WTC11 (cell line): ENCODE measurements at regions of chr19 and their contacts with region 1.

Region 1: DNA sequence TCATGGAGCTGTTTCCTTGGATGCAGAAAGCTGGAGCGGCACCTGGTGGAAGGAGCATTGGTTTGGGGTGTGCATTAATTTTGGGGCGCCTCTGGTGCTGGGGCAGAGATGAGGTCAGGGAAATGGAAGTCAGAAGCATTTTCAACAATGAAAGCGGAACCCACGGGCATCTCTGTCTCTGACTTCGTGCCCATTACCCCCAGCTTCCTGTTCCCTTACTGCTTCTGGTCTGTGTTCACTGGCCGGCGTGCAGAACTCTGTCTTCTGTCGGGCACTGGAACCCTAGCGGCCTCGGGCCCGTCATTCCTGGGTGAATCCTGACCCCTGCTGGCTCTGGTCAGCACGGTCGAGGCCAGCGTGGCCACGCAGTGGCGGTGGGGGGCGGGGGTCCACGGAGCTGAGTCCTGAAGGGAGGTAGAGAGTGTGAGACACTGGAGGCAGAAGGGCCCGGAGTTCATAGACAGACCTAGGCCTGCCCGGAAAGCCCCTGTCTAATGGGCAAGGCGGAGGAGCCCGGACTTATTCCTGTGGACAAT is 7.9 kb upstream of the LINGO3 start:
- DNase-seq: peak; percentile 82
- ATAC-seq: peak; percentile 71
- H3K4me3 Mint-ChIP-seq: no peak overlapping the region
- H3K27ac Mint-ChIP-seq: no peak overlapping the region
- H3K4me1 Mint-ChIP-seq: 0 out of 2 replicates have a peak, but pooled peaks cover 2% of the 10 kb centered on the region
- H3K27me3 Mint-ChIP-seq: peaks cover 9% of the 10 kb centered on the region
- CTCF ChIP-seq: no peak

Region 2: GRCh38 chr19:2151339-2152229 is 164.3 kb before region 1 on chr19 and contains the start of gene AP3D1:
- CTCF ChIA-PET with region 1: interaction called, 20 read pairs
- POLR2A ChIA-PET with region 1: no interaction called
- DNase-seq: peak; percentile 100
- ATAC-seq: peak; percentile 93
- H3K4me3 Mint-ChIP-seq: peak within 1 kb of the TSS; percentile 85
- H3K27ac Mint-ChIP-seq: peak within 1 kb of the TSS; percentile 97
- H3K4me1 Mint-ChIP-seq: peaks cover 28% of the 10 kb centered on the region
- H3K27me3 Mint-ChIP-seq: no peaks in the 10 kb centered on the region
- CTCF ChIP-seq: no peak
- total RNA-seq, gene AP3D1: 160 to 190 TPM (median 163 TPM) in 3 replicates

Region 3: GRCh38 chr19:2236314-2237050 is 79.4 kb before region 1 on chr19 and contains the starts of genes PLEKHJ1 and SF3A2:
- CTCF ChIA-PET with region 1: interaction called, 12 read pairs
- POLR2A ChIA-PET with region 1: interaction called, 4 read pairs
- DNase-seq: peak; percentile 97
- ATAC-seq: peak; percentile 83
- H3K4me3 Mint-ChIP-seq: peak within 1 kb of the TSS; percentile 93
- H3K27ac Mint-ChIP-seq: peak within 1 kb of the TSS; percentile 99
- H3K4me1 Mint-ChIP-seq: peaks cover 42% of the 10 kb centered on the region
- H3K27me3 Mint-ChIP-seq: peaks cover 5% of the 10 kb centered on the region; the same call in 1 of the 2 replicates
- CTCF ChIP-seq: peak; percentile 83
- total RNA-seq, gene PLEKHJ1: 164 to 189 TPM (median 167 TPM) in 3 replicates
- total RNA-seq, gene SF3A2: 167 to 184 TPM (median 169 TPM) in 3 replicates

Region 4: DNA sequence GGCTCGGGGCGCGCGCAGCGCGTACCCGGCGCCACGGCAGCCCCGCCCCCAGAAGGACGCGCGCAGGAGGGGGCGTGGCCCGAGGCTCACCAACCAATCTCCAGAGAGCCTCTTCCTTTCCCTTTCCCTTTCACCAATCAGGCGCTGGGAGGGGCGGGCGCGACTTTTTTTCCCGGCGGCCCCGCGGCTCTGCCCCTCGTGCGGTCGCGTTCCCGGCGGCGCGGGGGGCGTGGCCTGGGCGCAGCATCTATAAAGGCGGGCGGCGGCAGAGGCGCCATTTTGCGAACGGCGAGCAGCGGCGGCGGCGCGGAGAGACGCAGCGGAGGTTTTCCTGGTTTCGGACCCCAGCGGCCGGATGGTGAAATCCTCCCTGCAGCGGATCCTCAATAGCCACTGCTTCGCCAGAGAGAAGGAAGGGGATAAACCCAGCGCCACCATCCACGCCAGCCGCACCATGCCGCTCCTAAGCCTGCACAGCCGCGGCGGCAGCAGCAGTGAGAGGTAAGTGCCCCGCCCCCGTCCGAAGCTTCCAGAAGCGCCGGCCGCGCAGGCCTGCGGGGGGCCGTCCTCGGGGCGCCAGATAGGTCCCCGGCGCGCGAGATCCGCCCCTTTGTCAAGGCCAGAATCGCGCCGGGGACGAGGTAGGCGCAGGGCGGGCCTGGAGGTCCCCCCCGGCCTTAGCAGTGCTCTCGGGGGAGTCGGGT is 46.5 kb before region 1 on chr19:
- CTCF ChIA-PET with region 1: interaction called, 42 read pairs
- POLR2A ChIA-PET with region 1: no interaction called
- DNase-seq: peak; percentile 99
- ATAC-seq: peak; percentile 79
- H3K4me3 Mint-ChIP-seq: peak overlapping the region; percentile 82
- H3K27ac Mint-ChIP-seq: peak overlapping the region; percentile 76; the same call in 1 of the 2 replicates
- H3K4me1 Mint-ChIP-seq: peaks cover 33% of the 10 kb centered on the region
- H3K27me3 Mint-ChIP-seq: no peaks in the 10 kb centered on the region; the same call in 1 of the 2 replicates
- CTCF ChIP-seq: no peak

Region 5: GRCh38 chr19:2282062-2282861 is 33.6 kb before region 1 on chr19 and contains the start of gene PEAK3:
- CTCF ChIA-PET with region 1: interaction called, 13 read pairs
- POLR2A ChIA-PET with region 1: no interaction called
- DNase-seq: peak; percentile 70
- ATAC-seq: peak; percentile 77
- H3K4me3 Mint-ChIP-seq: peak within 1 kb of the TSS; percentile 67
- H3K27ac Mint-ChIP-seq: no peak within 1 kb of the TSS
- H3K4me1 Mint-ChIP-seq: peaks cover 5% of the 10 kb centered on the region; the same call in 1 of the 2 replicates
- H3K27me3 Mint-ChIP-seq: peaks cover 15% of the 10 kb centered on the region
- CTCF ChIP-seq: no peak
- total RNA-seq, gene PEAK3: not detected in 3 replicates

Region 6: DNA sequence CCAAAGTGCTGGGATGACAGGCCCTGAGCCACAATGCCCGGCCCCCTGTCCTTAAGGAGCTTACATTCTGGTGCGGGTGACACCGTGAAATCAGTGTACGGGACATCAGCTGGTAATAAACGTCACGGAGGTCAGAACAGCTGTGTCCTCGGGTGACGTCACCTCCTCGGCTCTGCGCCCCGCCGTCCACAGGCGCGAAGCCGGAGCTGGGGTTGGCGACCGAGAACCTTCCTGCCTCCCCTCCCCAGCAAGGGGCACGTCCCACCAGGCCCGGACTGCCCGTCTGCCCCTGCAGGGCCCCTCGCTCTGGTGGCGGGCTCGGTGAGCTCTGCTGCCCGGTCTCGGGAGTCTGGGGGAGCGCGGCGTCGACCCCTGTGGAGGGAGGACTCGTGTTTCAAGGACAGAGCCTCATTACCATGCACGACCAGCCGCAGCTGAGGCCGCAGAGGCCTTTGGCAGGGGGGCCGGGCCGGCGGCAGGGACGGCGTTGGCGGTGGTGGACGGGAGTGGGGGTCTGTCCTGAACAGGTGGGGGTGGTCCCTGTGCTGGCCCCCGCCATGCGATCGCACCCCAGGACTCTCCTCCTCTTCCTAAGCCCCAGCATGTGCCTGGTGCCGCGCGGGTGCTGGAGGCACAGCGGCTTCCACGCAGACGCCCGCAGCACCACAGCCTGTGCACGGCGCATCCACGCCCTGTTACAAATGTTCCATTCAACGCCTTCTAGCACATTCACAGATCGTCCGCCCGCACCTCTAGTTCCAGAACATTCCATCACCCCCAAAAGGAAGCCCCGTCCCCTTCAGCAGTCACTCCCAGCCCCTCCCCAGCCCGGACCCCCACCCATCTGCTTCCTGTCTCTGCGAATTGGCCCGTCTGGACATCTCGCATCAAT is 13.3 kb before region 1 on chr19:
- CTCF ChIA-PET with region 1: interaction called, 14 read pairs
- POLR2A ChIA-PET with region 1: interaction called, 3 read pairs
- DNase-seq: peak; percentile 72
- ATAC-seq: peak; percentile 75
- H3K4me3 Mint-ChIP-seq: peak overlapping the region; percentile 25; the same call in 1 of the 2 replicates
- H3K27ac Mint-ChIP-seq: no peak overlapping the region
- H3K4me1 Mint-ChIP-seq: peaks cover 5% of the 10 kb centered on the region
- H3K27me3 Mint-ChIP-seq: peaks cover 10% of the 10 kb centered on the region
- CTCF ChIP-seq: no peak